ENCODE measurements at regions of chr14 and their contacts with region 1.

Region 1: DNA sequence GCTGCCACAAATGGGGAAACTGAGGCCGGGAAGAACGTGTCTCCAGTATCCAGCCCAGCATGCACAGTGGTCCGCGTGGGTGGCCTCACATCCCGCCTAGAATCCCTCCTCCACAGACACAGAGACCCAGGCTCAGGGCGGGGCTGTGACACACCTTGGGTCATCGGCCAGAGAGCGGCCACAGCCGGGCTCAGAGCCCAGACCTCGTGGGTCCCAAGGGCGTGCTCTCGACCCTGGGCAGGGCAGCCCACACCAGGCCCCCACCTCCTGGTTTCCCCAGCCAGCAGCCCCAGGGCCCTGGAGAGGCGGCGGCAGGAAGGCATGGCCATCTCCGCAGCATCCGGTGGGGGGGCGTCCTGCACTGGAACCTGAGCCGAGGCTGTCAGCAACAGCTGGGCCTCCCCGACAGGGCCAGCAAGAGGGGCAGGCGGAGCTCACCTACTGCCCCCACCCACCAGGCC is 15.3 kb downstream of the JAG2 start:
- DNase-seq: peak; percentile 68 to 77
- ATAC-seq: peak; percentile 63 to 91 (median 82)
- H3K4me3 ChIP-seq: no peak overlapping the region
- H3K27ac ChIP-seq: peak overlapping the region; percentile 8 to 89 (median 80)
- H3K4me1 ChIP-seq: peaks cover 9 to 41% (median 30%) of the 10 kb centered on the region in 9 donors
- H3K27me3 ChIP-seq: no peaks in the 10 kb centered on the region
- CTCF ChIP-seq: no peak

Region 2: DNA sequence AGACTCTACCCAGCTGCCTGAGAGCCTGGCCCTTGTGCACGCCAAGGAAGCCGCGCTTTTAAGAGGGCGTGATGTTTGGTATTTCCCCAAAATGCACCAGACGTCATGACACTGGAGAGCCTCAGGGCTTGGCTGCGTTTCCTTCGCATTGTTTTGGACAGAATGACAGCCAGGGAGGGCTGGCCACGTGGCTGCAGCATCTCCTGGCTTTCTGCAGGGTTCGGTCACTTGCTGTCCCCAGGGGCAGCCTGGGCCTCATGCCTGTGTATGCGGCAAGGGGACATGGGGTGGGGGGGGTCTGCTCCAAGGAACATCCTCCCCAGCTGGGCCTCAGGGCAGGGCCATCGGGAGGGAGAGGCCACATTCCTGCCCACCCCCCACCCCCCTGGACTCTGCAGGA is 44.0 kb after region 1 on chr14:
- intact Hi-C with region 1: loop called in 2 of 10 experiments (anchors 5 kb)
- DNase-seq: peak; percentile 71 to 82
- ATAC-seq: peak; percentile 25 to 61 (median 43)
- H3K4me3 ChIP-seq: peak overlapping the region in 5 of 10 donors; percentile 6 to 38 (median 30)
- H3K27ac ChIP-seq: peak overlapping the region; percentile 80 to 96 (median 88)
- H3K4me1 ChIP-seq: peaks cover 28 to 97% (median 83%) of the 10 kb centered on the region in 9 donors
- H3K27me3 ChIP-seq: peaks cover 8 to 93% (median 46%) of the 10 kb centered on the region in 7 donors
- CTCF ChIP-seq: no peak